Cardiac septum (tissue), 1 donor: ENCODE measurements at regions of chr13 and their contacts with region 1.

Region 1: DNA sequence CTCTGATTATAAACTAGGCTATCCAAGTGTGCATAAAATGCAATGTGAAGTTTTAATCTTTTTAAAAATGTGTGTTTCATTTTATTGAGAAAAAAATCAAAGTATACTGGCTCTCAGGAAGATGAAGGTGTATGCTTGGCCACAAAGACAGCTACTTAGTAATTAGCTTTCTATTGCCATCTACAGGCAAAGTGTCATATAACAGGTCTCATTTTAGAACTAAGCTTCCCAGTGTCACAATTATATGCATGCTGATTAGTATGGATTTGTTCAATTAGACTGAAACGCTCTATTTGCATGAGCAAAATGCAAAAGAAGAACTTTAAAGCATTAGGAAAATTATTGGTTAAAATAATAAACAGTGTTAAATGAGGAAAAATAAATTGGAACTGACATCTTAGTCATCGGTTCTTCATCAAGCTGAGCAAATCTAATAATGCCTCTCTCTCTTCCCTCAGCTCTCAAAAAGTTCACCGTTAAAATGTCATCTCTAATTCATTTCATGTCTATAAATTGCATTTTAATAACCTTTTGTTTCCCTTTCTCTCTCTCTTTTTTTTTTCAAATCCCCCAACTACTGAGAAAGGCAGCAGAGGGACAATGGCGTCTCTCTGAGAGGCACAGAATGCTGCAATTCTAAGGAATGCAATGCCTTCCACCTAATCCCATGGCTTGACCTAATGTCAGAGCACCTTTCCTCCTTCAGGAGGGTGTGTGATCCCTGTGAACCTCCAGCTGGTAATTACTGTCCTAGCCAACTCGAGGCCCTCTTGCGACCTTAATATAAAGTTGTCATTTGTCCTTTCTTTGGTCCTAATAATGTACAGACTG is 313.1 kb upstream of the MAB21L1 start:
- DNase-seq: no peak

Region 2: DNA sequence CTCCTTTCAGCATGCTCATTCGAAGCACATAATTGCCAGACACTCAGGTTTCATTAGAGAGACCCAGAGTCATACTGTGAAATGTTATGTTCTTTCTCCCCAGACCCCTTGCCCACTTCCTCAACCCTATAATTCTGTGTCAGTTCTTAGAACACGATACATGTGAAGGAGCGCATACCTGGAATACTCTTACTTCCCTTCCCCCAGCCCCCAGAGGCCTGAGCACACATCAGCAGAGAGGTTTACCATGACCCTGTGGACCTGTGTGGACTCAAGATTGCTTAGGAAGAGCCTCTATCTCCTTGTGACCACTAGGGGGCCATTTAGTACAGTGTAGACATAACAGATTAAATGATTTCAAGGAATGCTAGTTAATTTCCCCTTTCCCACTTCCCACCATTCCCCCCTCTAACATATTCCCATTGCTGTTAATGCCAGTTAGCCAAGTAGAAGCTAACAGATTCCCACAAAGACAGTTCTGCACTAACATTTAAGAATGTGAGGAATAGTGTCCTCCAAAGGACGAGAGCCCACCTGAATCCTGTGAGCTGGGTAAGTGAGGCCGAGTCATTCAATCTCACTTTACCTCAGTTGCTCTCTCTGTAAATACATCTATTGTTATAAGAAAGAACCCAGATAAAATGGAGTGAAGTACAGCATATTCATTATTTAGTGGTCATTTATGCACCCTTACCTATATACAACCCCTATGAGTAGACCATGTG is 158.8 kb before region 1 on chr13:
- intact Hi-C with region 1: loop called (anchors 5 kb)
- DNase-seq: no peak

Region 3: DNA sequence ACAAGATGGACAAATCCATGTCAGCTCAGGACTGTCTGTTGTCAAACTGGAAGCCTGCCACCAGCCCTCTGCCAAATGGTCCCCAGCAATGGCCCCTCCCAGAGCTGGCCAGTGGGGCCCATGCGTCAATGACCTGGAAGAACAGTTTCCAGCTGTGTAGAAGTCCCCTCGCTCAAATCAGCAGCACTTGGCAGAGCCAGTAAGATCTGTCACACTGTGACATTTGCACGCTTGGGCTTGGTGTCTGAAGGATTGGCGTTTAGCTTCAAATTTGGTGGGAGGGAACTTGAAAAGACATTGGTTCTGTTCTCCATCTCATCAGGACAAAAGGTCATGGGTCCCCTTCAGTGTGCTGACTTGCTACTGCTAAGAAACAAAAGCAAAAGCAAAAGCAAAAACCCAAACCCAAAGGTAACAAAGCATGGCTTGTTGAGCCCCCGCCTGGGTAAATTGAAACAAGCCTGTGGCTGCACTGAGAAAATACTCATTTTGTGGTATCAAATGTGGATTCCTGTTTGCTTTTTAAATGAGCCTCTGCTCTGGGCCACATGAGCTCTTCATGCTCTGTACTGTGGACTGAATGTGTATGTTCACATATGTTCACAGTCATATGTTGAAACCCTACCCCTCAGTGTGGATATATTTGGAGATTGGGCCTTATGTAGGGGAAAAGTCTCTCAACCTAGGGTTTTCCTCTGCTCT is 59.5 kb before region 1 on chr13:
- intact Hi-C with region 1: loop called (anchors 10 kb)
- DNase-seq: peak; percentile 82

Region 4: DNA sequence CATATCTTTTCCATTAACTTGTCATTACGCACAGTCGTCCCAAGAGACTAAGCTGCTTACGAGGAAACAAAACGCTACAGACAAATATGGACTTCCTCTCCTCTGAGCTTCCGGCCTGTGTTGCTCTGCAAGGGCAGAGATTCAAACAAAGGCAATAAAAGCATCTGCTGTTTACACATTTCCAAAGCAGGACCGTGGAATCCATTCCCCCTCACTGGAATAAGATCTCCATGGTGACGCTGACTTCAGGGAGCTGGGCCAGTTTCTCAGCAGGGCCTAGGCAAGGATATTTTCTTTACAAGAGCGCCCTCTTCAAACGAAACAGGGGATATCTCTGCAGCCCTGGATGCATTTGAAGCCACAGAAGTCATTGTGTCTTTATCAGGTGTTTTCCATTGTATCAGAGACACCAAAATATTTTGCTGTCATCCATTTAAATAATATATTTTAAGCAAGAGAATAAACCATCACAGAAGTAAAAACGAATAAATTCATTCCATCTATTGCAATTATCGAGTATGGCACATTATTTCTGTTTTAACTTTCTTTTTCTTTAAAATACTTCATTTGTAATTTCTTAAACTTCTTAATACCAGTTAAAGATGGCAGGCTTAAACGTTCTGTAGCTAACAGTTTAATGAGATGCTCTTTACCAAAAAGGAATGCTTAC is 164.1 kb after region 1 on chr13:
- intact Hi-C with region 1: no loop called
- DNase-seq: peak; percentile 83